ENCODE measurements at regions of chr5 and their contacts with region 1.

Region 1: GRCh38 chr5:150409638-150410523 is 2.8 kb downstream of the CD74 start:
- DNase-seq: peak in 7 of 9 donors; percentile 27 to 48 (median 43)
- ATAC-seq: no peak
- H3K4me3 ChIP-seq: peak overlapping the region; percentile 83
- H3K4me3 Mint-ChIP-seq: peak overlapping the region; percentile 91 to 100 (median 98)
- H3K27ac ChIP-seq: peak overlapping the region; percentile 98
- H3K27ac Mint-ChIP-seq: peak overlapping the region; percentile 96 to 100 (median 100)
- H3K4me1 ChIP-seq: peaks cover 32 to 35% of the 10 kb centered on the region in 2 donors
- H3K4me1 Mint-ChIP-seq: peaks cover 24 to 52% (median 38%) of the 10 kb centered on the region in 7 donors
- H3K27me3 ChIP-seq: no peaks in the 10 kb centered on the region
- H3K27me3 Mint-ChIP-seq: no peaks in the 10 kb centered on the region

Region 2: DNA sequence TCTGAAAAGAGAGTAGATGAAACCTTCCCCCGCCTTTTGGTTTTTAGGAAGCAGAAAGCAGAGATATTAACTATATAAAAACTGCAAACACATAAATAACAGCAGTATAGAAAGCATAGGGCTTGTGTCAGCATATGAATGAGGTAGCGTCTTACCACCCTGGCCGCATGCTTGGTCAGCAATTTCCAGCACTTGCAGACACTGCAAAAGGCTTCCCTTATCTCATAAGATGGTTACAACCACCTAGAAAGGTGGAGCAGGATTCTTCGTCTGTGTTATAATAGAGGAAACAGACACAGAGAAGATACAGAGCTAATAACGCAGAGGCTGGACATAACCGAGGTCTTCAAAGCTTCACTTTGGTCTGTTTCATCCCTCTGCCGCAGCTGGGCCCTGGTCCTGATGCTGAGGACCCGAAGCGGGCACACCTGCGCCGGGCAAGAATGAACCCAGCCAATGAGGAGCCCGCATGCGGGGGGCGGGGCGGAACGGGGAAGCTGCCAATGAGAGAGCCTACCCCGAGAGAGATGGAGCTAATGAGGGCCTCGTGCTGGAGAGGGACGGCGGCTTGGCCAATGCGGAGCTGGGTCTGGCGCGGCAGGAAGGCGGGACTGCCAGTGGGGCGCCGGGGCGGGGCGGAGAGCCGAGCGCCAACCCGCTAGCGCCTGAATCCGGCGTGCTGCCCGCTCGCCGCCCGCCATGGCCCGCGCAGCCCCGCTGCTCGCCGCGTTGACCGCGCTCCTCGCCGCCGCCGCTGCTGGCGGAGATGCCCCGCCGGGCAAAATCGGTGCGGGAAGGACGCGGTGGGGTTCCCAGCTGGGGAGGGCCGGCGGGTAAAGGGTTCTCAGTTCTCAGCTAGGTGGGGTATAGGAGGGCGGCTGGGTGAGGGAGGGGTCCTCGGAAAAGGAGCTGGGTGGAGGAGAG is 1052.2 kb before region 1 on chr5 and contains the start of gene PCYOX1L:
- CTCF ChIA-PET with region 1: no interaction called
- POLR2A ChIA-PET with region 1: no interaction called
- intact Hi-C with region 1: loop called (anchors 5 kb)
- DNase-seq: peak; percentile 88 to 98 (median 94)
- ATAC-seq: peak; percentile 99
- H3K4me3 ChIP-seq: peak within 1 kb of the TSS; percentile 80
- H3K4me3 Mint-ChIP-seq: peak within 1 kb of the TSS; percentile 80 to 99 (median 94)
- H3K27ac ChIP-seq: peak within 1 kb of the TSS; percentile 83
- H3K27ac Mint-ChIP-seq: peak within 1 kb of the TSS; percentile 83 to 96 (median 92)
- H3K4me1 ChIP-seq: peaks cover 15 to 36% of the 10 kb centered on the region in 2 donors
- H3K4me1 Mint-ChIP-seq: peaks cover 41 to 82% (median 65%) of the 10 kb centered on the region in 7 donors
- H3K27me3 ChIP-seq: no peaks in the 10 kb centered on the region
- H3K27me3 Mint-ChIP-seq: no peaks in the 10 kb centered on the region
- total RNA-seq, gene PCYOX1L: 29.7 to 53.7 (median 36.3) TPM

Region 3: DNA sequence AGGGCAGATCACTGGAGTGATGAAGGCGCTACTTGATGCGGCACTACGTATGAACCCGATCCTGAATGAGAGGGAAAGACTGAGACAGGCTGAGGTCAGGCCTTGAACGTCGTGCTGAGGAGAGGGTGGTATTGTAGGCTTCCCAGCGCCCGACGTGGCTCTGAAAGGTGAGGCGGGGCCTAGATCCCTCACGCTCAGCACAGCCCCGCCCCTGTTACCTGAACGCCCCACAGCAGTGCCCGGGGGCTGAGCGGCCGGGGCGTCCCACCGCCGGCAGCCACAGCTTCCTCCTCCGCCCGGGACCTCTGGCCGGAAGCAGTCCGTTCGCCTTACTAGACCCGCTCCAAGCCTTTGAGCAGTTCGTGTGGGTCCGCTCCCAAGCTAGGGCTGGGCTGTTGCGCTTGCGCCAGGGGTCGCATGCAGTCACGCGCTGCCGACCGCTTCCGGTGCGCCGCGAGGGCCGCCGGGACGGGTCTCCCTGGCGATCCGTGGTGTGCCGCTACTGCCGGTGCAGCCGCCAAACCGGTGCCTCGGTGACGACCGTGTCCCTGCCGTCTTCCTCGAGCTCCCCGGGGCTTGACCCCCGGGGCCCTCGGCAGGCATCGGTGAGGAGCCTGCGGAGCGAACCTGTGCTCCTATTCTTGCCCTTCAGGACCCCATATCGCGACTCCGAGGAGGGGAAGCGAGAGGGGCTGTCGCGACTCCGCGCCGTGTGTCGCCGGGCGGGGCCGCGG is 409.5 kb before region 1 on chr5 and contains the starts of genes HMGXB3 and TIGD6:
- CTCF ChIA-PET with region 1: no interaction called
- POLR2A ChIA-PET with region 1: no interaction called
- intact Hi-C with region 1: loop called (anchors 1 to 2 kb)
- DNase-seq: peak; percentile 64 to 87 (median 74)
- ATAC-seq: peak; percentile 83
- H3K4me3 ChIP-seq: peak within 1 kb of the TSS; percentile 76
- H3K4me3 Mint-ChIP-seq: peak within 1 kb of the TSS; percentile 86 to 99 (median 93)
- H3K27ac ChIP-seq: peak within 1 kb of the TSS; percentile 80
- H3K27ac Mint-ChIP-seq: peak within 1 kb of the TSS; percentile 75 to 98 (median 94)
- H3K4me1 ChIP-seq: peaks cover 18 to 23% of the 10 kb centered on the region in 2 donors
- H3K4me1 Mint-ChIP-seq: peaks cover 33 to 55% (median 46%) of the 10 kb centered on the region in 7 donors
- H3K27me3 ChIP-seq: no peaks in the 10 kb centered on the region
- H3K27me3 Mint-ChIP-seq: no peaks in the 10 kb centered on the region
- total RNA-seq, gene HMGXB3: 27.2 to 40.6 (median 34.5) TPM
- total RNA-seq, gene TIGD6: 2.3 to 7.4 (median 2.8) TPM

Region 4: DNA sequence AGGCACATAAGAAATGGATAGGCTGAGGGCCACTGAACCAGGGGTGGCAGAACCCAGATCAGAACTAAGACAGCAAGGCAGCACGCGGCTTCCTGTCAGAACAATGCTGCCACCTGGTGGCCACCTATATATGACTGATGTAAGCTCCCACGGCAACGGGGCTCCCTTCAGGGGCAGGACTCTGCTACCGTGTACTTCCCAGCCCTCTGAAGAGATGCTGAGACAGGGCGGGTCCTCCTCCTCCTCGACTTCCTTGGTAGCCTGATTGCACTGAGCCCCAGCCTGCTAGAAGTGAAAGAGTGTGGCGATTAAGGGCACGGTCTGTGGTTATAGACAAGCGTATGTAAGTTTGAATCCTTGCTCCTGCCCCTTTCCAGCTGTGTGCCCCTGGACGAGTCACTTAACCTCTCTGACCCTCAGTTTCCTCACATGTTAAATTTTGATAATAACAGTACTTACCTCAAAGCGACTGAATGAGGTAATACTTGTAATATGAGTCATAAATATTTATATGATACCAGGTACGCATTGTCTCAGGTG is 26.3 kb after region 1 on chr5:
- CTCF ChIA-PET with region 1: interaction called, 17 read pairs
- POLR2A ChIA-PET with region 1: interaction called, 7 read pairs
- intact Hi-C with region 1: loop called (anchors 1 kb)
- DNase-seq: peak; percentile 74 to 89 (median 86)
- ATAC-seq: peak; percentile 99
- H3K4me3 ChIP-seq: no peak overlapping the region
- H3K4me3 Mint-ChIP-seq: peak overlapping the region in 6 of 10 donors; percentile 29 to 61 (median 56)
- H3K27ac ChIP-seq: peak overlapping the region; percentile 12
- H3K27ac Mint-ChIP-seq: peak overlapping the region; percentile 53 to 94 (median 72)
- H3K4me1 ChIP-seq: peaks cover 0 to 7% of the 10 kb centered on the region in 2 donors
- H3K4me1 Mint-ChIP-seq: peaks cover 6 to 11% (median 7%) of the 10 kb centered on the region in 7 donors
- H3K27me3 ChIP-seq: no peaks in the 10 kb centered on the region
- H3K27me3 Mint-ChIP-seq: no peaks in the 10 kb centered on the region

Region 5: DNA sequence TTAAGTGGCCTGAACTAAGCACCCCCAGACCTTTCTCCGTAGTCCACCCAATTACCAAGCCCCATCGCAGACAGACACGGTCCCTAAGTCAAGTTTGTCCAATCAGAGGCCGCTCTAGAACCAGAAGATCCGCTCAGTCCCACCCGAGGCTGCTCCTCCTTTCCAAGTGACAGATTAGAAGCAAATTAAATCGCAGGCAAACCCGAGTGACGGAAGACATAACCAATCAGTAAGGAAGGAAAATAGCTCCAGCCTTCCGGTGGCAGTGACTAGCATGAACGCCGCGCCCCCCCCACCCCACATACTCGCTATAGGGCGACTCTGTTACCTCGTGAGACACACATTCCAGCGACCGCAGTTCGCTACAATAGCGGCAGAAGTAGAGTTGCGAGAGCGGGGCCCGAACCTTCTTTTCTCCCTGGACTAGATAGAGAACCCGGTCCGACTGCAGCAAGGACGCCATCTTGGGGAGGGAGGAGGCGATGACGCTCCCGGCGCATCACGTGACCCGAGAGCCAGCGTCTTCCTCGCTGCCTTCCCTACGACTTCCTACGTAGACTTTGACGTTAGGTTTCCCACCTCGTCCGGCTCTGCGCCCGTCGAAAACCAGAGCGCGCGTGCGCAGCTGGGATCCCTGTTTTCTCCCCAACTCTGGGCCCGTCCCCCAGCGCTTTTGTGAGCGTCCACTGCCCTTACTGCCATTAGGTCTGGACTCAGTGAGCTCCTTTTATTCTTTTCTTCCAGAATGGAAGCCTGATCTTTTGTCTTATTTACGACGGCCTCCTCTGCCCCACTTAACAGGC is 348.9 kb after region 1 on chr5 and contains the start of gene DCTN4:
- CTCF ChIA-PET with region 1: no interaction called
- POLR2A ChIA-PET with region 1: no interaction called
- intact Hi-C with region 1: loop called in 1 of 2 experiments (anchors 5 kb)
- DNase-seq: peak; percentile 84 to 96 (median 94)
- ATAC-seq: peak; percentile 95
- H3K4me3 ChIP-seq: peak within 1 kb of the TSS; percentile 86
- H3K4me3 Mint-ChIP-seq: peak within 1 kb of the TSS in 3 of 10 donors; percentile 23 to 46 (median 36)
- H3K27ac ChIP-seq: peak within 1 kb of the TSS; percentile 96
- H3K27ac Mint-ChIP-seq: peak within 1 kb of the TSS in 1 of 9 donors; percentile 62
- H3K4me1 ChIP-seq: peaks cover 5 to 16% of the 10 kb centered on the region in 2 donors
- H3K4me1 Mint-ChIP-seq: peaks cover 22 to 54% (median 36%) of the 10 kb centered on the region in 7 donors
- H3K27me3 ChIP-seq: no peaks in the 10 kb centered on the region
- H3K27me3 Mint-ChIP-seq: peaks cover 0 to 5% (median 0%) of the 10 kb centered on the region in 5 donors
- total RNA-seq, gene DCTN4: 42.4 to 88.2 (median 46.9) TPM

Region 6: DNA sequence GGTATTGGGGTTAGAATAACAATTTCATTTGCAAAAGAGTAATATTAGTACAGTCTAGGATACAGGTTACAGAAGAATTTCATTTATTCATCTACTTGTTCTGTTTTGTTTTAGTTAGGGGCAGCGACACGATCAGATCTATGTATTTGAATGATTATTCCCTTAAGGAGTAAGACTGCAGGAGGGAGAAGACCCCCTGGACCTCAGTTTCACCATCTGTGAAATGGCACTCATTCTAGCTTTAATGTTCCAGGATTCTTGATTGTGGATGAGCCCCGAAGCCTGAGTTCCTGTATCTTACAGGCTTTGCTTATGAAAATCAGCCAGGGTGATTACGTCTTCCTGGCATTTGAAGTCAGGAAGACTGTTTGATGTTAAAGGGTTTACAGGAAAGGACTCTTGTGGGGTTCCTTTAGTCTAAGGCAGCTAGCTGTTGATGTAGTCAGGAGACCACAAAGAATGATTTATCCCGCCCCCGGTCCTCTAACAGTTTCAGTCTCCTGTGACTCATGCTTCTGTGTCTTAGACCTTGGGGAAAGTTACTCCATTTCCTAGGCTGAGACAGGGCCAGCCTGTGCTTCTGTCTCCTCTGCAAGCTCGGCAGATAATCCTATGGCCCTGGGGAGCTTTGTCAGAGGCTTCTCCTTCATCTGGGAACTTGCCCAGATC is 380.2 kb after region 1 on chr5:
- CTCF ChIA-PET with region 1: no interaction called
- POLR2A ChIA-PET with region 1: no interaction called
- intact Hi-C with region 1: no loop called
- DNase-seq: peak in 8 of 9 donors; percentile 37 to 73 (median 63)
- ATAC-seq: peak; percentile 94
- H3K4me3 ChIP-seq: no peak overlapping the region
- H3K4me3 Mint-ChIP-seq: peak overlapping the region; percentile 46 to 77 (median 66)
- H3K27ac ChIP-seq: peak overlapping the region; percentile 19
- H3K27ac Mint-ChIP-seq: peak overlapping the region; percentile 63 to 95 (median 85)
- H3K4me1 ChIP-seq: peaks cover 0 to 15% of the 10 kb centered on the region in 2 donors
- H3K4me1 Mint-ChIP-seq: peaks cover 21 to 64% (median 56%) of the 10 kb centered on the region in 7 donors
- H3K27me3 ChIP-seq: no peaks in the 10 kb centered on the region
- H3K27me3 Mint-ChIP-seq: no peaks in the 10 kb centered on the region

Region 7: DNA sequence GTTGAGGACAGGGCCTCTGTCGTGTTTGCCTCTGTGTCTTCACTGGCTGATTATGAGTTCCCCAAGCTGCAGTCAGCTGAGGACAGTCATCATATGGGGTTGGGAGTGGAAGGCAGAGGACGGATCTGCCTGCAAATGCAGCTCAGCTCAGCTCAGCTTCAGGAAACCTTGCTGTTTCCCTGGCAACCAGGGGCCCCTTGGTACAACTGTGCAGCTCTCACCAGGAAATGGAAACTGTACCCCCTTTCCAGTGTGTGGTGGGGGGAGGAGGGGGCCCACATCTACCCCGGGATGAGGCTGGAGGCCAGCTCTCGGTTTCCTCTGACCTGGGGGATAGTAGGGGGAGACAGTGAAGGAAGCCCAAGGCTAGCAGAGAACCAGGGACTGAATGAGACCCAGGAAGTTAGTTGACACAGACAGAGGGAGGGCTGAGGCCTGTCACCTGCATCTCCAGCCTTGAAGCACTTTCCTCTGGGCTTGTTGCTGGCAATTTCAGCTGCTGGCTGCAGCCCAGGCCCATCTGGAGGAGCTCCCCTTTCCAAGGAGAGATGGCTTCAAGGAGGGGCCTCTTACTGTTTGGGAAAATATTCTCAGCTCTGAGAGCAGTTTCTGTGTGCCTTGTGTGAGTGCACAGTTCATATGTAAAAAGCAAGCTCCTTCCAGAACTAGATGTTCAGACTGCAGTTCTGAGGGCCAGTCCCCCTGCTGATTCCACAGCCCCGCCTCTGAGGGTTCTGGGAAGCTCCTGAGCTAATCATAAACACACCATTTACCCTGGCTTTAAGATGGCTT is 740.8 kb after region 1 on chr5:
- CTCF ChIA-PET with region 1: no interaction called
- POLR2A ChIA-PET with region 1: interaction called, 3 read pairs
- intact Hi-C with region 1: loop called (anchors 2 to 5 kb)
- DNase-seq: peak; percentile 39 to 93 (median 83)
- ATAC-seq: peak; percentile 89
- H3K4me3 ChIP-seq: peak overlapping the region; percentile 44
- H3K4me3 Mint-ChIP-seq: peak overlapping the region; percentile 70 to 97 (median 86)
- H3K27ac ChIP-seq: peak overlapping the region; percentile 92
- H3K27ac Mint-ChIP-seq: peak overlapping the region; percentile 91 to 99 (median 97)
- H3K4me1 ChIP-seq: peaks cover 93 to 99% of the 10 kb centered on the region in 2 donors
- H3K4me1 Mint-ChIP-seq: peaks cover 80 to 100% (median 96%) of the 10 kb centered on the region in 7 donors
- H3K27me3 ChIP-seq: no peaks in the 10 kb centered on the region
- H3K27me3 Mint-ChIP-seq: no peaks in the 10 kb centered on the region